Mammary epithelial cell (primary cell): ENCODE measurements at regions of chr10 and their contacts with region 1.

Region 1: GRCh38 chr10:26839966-26840627 is 20.7 kb downstream of the ABI1 start:
- DNase-seq: no peak
- H3K4me3 ChIP-seq: no peak overlapping the region
- H3K27ac ChIP-seq: no peak overlapping the region
- H3K4me1 ChIP-seq: peaks cover 16% of the 10 kb centered on the region
- H3K27me3 ChIP-seq: no peaks in the 10 kb centered on the region
- CTCF ChIP-seq: no peak

Region 2: GRCh38 chr10:26799342-26799741 is 40.8 kb before region 1 on chr10:
- CTCF ChIA-PET with region 1: no interaction called
- dilution Hi-C with region 1: loop called (anchors 5 kb)
- in situ Hi-C with region 1: no loop called
- intact Hi-C with region 1: no loop called
- DNase-seq: no peak
- H3K4me3 ChIP-seq: no peak overlapping the region
- H3K27ac ChIP-seq: no peak overlapping the region
- H3K4me1 ChIP-seq: no peaks in the 10 kb centered on the region
- H3K27me3 ChIP-seq: no peaks in the 10 kb centered on the region
- CTCF ChIP-seq: no peak

Region 3: DNA sequence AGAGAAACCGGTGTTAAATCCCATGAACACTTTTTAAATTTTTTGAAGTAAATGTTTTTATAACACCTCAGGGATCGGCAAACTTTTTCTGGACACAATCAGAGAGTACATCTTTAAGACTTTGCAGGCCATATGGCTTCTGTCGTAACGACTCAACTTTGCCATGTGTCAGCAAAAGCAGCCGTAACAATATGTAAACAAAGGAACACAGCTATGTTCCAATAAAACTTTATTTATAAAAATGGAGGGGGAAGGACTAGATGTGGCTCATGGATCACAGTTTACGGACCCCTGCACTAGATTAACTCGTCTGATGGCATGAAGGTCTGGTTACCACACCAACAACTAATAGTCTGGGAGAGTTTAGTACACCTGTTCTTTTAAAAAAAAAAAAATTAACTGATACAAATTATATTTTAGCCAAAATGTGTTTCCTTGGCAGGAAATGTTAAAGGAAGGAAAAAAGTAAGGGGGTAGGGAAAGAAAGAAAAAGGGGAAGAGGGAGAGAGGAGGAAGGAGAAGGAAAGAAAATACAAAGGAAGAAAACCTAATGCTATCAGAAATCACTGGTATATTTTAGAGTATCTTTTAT is 29.6 kb before region 1 on chr10:
- CTCF ChIA-PET with region 1: no interaction called
- dilution Hi-C with region 1: no loop called
- in situ Hi-C with region 1: no loop called
- intact Hi-C with region 1: no loop called
- DNase-seq: no peak
- H3K4me3 ChIP-seq: no peak overlapping the region
- H3K27ac ChIP-seq: no peak overlapping the region
- H3K4me1 ChIP-seq: no peaks in the 10 kb centered on the region
- H3K27me3 ChIP-seq: no peaks in the 10 kb centered on the region
- CTCF ChIP-seq: no peak

Region 4: GRCh38 chr10:27457966-27458365 is 617.9 kb after region 1 on chr10:
- CTCF ChIA-PET with region 1: no interaction called
- dilution Hi-C with region 1: no loop called
- in situ Hi-C with region 1: no loop called
- intact Hi-C with region 1: no loop called
- DNase-seq: no peak
- H3K4me3 ChIP-seq: no peak overlapping the region
- H3K27ac ChIP-seq: no peak overlapping the region
- H3K4me1 ChIP-seq: no peaks in the 10 kb centered on the region
- H3K27me3 ChIP-seq: no peaks in the 10 kb centered on the region
- CTCF ChIP-seq: no peak